Calu3 (cell line): ENCODE measurements at regions of chr16 and their contacts with region 1.

Region 1: GRCh38 chr16:84726079-84726668 is 26.4 kb downstream of the USP10 start:
- DNase-seq: peak; percentile 94
- H3K4me3 Mint-ChIP-seq: peak overlapping the region; percentile 35
- H3K27ac Mint-ChIP-seq: peak overlapping the region; percentile 26
- H3K4me1 Mint-ChIP-seq: peaks cover 77% of the 10 kb centered on the region
- H3K27me3 Mint-ChIP-seq: no peaks in the 10 kb centered on the region
- CTCF ChIP-seq: peak; percentile 96

Region 2: DNA sequence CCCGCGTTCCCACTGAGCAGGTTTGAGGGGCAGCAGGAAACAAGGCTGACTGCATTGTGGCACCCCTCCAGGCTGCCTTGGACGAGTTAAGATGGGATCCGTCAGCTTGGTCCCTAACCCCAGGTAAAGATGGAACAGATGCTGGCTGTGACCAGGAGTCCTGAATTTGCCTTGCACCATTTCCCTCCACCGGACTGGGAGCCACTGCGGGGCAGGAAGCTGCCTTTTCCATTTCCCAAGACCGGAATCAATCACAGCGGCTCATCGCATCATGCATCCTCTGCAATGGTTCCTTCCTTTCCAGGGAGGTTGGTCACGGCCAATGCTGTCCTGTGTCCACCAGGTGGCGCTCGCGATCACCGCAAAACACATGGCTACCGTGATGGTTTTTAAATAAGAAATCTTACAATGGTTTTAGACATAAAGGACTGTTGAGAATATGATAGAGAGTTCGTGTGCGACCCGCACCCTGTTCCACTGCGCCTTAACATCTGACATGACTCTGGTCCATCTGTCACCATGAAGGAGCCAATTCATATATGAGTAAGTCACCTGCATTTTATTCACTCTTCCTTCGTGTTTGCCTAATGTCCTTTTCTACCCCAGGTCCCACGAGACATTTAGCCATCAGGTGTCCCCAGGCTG is 214.9 kb before region 1 on chr16:
- CTCF ChIA-PET with region 1: interaction called, 5 read pairs
- intact Hi-C with region 1: loop called (anchors 1 kb)
- DNase-seq: peak; percentile 85
- H3K4me3 Mint-ChIP-seq: no peak overlapping the region
- H3K27ac Mint-ChIP-seq: peak overlapping the region; percentile 25
- H3K4me1 Mint-ChIP-seq: peaks cover 40% of the 10 kb centered on the region
- H3K27me3 Mint-ChIP-seq: no peaks in the 10 kb centered on the region
- CTCF ChIP-seq: peak; percentile 84

Region 3: GRCh38 chr16:84672276-84673202 is 53.6 kb before region 1 on chr16:
- CTCF ChIA-PET with region 1: interaction called, 21 read pairs
- intact Hi-C with region 1: loop called (anchors 2 kb)
- DNase-seq: peak; percentile 90
- H3K4me3 Mint-ChIP-seq: no peak overlapping the region
- H3K27ac Mint-ChIP-seq: no peak overlapping the region
- H3K4me1 Mint-ChIP-seq: no peaks in the 10 kb centered on the region
- H3K27me3 Mint-ChIP-seq: peaks cover 17% of the 10 kb centered on the region
- CTCF ChIP-seq: peak; percentile 93

Region 4: GRCh38 chr16:84738255-84739038 is 12.3 kb after region 1 on chr16:
- CTCF ChIA-PET with region 1: interaction called, 25 read pairs
- intact Hi-C with region 1: no loop called
- DNase-seq: peak; percentile 87
- H3K4me3 Mint-ChIP-seq: no peak overlapping the region
- H3K27ac Mint-ChIP-seq: no peak overlapping the region
- H3K4me1 Mint-ChIP-seq: peaks cover 79% of the 10 kb centered on the region
- H3K27me3 Mint-ChIP-seq: no peaks in the 10 kb centered on the region
- CTCF ChIP-seq: peak; percentile 94

Region 5: GRCh38 chr16:84785843-84786581 is 59.8 kb after region 1 on chr16:
- CTCF ChIA-PET with region 1: no interaction called
- intact Hi-C with region 1: no loop called
- DNase-seq: peak; percentile 91
- H3K4me3 Mint-ChIP-seq: peak overlapping the region; percentile 25
- H3K27ac Mint-ChIP-seq: peak overlapping the region; percentile 48
- H3K4me1 Mint-ChIP-seq: peaks cover 21% of the 10 kb centered on the region
- H3K27me3 Mint-ChIP-seq: no peaks in the 10 kb centered on the region
- CTCF ChIP-seq: no peak